Caco-2 (cell line): ENCODE measurements at regions of chr19 and their contacts with region 1.

Region 1: DNA sequence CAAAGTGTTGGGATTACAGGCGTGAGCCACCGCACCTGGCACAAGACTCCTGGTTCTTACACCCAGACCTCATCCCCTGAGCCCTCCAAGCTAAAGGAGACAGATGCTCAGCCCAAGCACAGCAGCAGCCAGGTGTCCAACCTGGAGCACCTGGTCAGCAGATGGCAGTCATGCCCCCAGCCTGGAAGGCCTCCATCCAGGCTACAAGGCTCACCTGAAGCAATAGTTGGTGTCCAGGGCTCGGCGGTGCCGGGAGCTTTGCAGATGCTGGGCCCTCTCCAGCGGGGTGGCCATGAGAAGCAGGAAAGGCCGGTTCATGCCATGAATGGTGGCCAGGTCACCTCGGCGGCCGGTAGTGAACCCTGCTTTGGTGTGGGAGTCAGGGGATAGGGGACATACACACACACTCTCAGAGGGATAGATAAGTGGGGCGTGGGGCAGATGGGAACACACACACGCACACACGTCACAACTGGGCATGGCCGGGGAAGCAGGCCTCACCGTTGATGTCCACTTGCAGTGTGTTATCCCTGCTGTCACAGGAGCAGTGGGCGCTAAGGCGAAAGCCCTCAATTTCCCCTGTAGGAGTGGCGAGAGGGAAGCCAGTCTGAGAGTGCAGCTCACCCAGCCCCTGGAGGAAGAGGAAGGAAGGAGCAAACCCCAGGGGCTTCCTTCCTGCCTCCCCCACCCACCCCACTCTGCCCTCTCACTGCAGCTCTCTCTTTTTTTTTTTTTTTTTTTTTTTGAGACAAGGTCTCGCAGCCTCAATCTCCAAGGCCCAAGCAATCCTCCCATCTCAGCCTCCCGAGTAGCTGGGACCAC is 11.8 kb downstream of the TGFB1 start:
- DNase-seq: peak; percentile 68 to 73
- H3K4me3 ChIP-seq: no peak overlapping the region
- H3K4me3 Mint-ChIP-seq: no peak overlapping the region
- H3K27ac Mint-ChIP-seq: no peak overlapping the region
- H3K4me1 ChIP-seq: no peaks in the 10 kb centered on the region
- H3K4me1 Mint-ChIP-seq: no peaks in the 10 kb centered on the region
- H3K27me3 ChIP-seq: no peaks in the 10 kb centered on the region
- H3K27me3 Mint-ChIP-seq: no peaks in the 10 kb centered on the region
- CTCF ChIP-seq: peak; percentile 53 to 84

Region 2: DNA sequence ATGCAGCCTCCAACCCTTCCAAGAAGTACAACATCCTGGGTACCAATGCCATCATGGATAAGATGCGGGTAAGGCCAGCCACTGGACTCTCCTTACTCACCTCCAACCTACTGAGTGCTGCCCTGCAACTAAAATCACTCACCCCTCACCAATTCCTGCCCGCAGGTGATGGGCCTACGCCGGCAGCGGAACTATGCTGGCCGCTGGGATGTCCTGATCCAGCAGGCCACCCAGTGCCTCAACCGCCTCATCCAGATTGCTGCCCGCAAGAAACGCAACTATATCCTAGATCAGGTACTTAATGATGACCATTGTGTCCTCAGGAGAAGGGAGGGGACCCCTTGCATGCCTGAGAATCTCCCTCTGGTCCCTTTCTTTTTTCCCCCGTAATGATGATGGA is 47.5 kb before region 1 on chr19:
- CTCF ChIA-PET with region 1: no interaction called
- POLR2A ChIA-PET with region 1: no interaction called
- intact Hi-C with region 1: no loop called
- DNase-seq: no peak
- H3K4me3 ChIP-seq: no peak overlapping the region
- H3K4me3 Mint-ChIP-seq: no peak overlapping the region
- H3K27ac Mint-ChIP-seq: no peak overlapping the region
- H3K4me1 ChIP-seq: peaks cover 13% of the 10 kb centered on the region
- H3K4me1 Mint-ChIP-seq: peaks cover 6% of the 10 kb centered on the region
- H3K27me3 ChIP-seq: no peaks in the 10 kb centered on the region
- H3K27me3 Mint-ChIP-seq: no peaks in the 10 kb centered on the region
- CTCF ChIP-seq: no peak

Region 3: GRCh38 chr19:41353466-41354342 is 11.8 kb after region 1 on chr19 and contains the start of gene TGFB1:
- CTCF ChIA-PET with region 1: interaction called, 19 read pairs
- POLR2A ChIA-PET with region 1: no interaction called
- intact Hi-C with region 1: loop called (anchors 1 kb)
- DNase-seq: peak; percentile 77 to 87
- H3K4me3 ChIP-seq: peak within 1 kb of the TSS; percentile 73
- H3K4me3 Mint-ChIP-seq: peak within 1 kb of the TSS; percentile 83
- H3K27ac Mint-ChIP-seq: peak within 1 kb of the TSS; percentile 23
- H3K4me1 ChIP-seq: peaks cover 4% of the 10 kb centered on the region; the same call in 1 of the 2 replicates
- H3K4me1 Mint-ChIP-seq: peaks cover 24% of the 10 kb centered on the region
- H3K27me3 ChIP-seq: no peaks in the 10 kb centered on the region; the same call in 1 of the 2 replicates
- H3K27me3 Mint-ChIP-seq: peaks cover 11% of the 10 kb centered on the region
- CTCF ChIP-seq: peak; percentile 96
- total RNA-seq, gene TGFB1: 15.0 and 15.3 TPM in 2 replicates

Region 4: DNA sequence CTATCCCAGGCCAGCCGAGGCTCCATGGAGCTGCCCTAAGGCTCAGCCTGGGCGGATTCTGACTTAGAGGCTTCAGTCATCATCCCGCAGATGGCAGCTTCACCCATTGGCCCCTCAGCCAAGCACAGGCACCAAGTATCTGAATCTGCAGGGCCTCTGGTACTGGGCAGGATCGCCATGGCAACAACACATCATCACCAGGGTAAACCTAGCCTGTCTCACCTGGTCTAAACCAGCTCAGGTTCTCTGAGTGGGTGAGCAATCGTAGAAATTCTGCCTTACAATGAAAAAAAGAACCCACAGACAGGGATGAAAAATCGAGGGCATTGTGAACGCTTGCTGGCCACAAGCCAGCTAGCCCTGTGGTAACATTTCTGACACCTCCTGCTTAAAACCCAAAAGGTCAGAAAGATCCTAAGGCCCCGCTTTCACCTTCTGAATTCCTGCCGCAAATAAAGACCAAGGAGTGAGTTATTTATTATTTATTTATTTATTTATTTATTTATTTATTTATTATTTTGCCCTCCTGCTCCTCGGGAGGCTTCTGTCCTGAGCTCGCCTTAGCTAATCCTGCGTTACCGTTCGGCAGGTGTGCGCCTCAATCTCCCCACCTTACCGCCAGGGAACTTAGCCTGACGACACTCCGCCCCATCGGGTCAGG is 222.1 kb after region 1 on chr19:
- CTCF ChIA-PET with region 1: interaction called, 6 read pairs
- POLR2A ChIA-PET with region 1: no interaction called
- intact Hi-C with region 1: loop called (anchors 10 kb)
- DNase-seq: no peak
- H3K4me3 ChIP-seq: no peak overlapping the region
- H3K4me3 Mint-ChIP-seq: no peak overlapping the region
- H3K27ac Mint-ChIP-seq: no peak overlapping the region
- H3K4me1 ChIP-seq: no peaks in the 10 kb centered on the region
- H3K4me1 Mint-ChIP-seq: no peaks in the 10 kb centered on the region
- H3K27me3 ChIP-seq: no peaks in the 10 kb centered on the region
- H3K27me3 Mint-ChIP-seq: peaks cover 22% of the 10 kb centered on the region
- CTCF ChIP-seq: no peak